Right ventricle myocardium inferior (tissue), 1 donor: ENCODE measurements at regions of chr9 and their contacts with region 1.

Region 1: DNA sequence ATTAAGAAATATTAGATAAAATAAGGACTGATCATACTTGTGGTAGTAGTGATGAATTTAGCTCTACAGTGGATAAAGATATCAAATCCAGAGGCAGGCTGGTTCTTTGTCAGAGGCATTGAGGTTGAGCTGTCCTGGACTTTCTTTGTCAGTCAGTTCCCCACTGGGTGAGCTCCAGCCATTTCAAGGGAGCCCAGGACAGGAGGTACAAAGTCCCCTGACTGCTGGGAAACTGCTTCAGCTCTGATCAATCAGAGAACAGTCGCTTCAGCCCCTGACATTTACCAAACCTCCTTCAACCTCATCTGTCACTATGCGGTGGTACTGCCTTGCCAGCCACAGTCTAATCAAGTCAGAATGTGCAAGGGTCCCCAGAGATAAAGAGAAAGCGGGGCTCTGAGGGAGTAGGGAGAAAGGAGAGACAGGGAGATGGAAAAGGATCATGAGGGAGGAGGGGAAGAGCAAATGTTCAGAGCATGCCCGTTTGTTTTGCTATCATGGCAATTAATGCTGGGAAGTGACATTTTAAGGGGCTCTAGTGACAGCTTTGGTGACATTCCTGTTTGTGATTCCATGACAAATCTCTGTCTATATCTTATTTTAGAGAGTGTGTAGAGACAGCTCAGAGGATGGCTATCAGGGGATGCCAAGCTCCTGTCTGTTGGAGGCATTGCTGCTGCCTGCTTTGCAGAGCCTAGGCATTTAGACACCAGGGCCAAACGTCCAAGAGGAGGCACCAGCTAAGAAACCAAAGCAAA is 223.2 kb downstream of the ASTN2 start:
- DNase-seq: no peak
- ATAC-seq: no peak

Region 2: GRCh38 chr9:117116084-117116483 is 75.6 kb before region 1 on chr9:
- intact Hi-C with region 1: no loop called
- DNase-seq: no peak
- ATAC-seq: no peak

Region 3: DNA sequence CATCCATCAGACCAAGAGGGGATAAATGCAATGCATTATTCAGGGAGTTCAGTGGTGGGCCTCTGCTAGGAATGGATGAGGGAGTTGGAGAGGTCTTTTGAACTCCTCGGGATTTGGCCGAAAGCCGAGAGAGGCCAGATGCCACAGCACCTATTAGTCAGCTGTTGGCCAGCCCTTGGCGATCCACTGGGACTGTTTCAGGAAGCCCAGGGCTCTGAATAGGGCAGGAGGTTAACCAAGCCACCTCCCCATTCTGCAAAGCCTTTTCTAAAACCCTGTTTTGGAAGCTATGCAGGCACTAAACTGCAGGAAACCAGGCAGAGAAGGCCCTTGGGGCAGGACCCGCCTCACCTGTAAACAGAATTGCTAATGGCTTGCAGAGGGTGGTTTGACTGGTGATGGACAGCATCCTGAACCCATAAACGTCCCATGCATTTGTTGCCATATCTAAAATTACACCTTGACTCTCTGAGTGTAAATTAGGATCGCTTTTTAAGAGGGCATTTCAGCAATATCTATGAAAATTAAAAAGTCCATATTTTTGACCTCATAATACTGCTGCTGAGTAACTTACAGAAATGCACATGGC is 185.5 kb after region 1 on chr9:
- intact Hi-C with region 1: loop called (anchors 5 kb)
- DNase-seq: no peak
- ATAC-seq: no peak